ENCODE measurements at regions of chr16 and their contacts with region 1.

Region 1: GRCh38 chr16:56608043-56608875 is at the start of gene MT2A:
- DNase-seq: peak; percentile 93
- ATAC-seq: peak; percentile 48
- H3K4me3 ChIP-seq: peak within 1 kb of the TSS; percentile 90
- H3K27ac ChIP-seq: peak within 1 kb of the TSS; percentile 82
- H3K4me1 ChIP-seq: peaks cover 71% of the 10 kb centered on the region
- H3K27me3 ChIP-seq: no peaks in the 10 kb centered on the region
- CTCF ChIP-seq: no peak
- total RNA-seq, gene MT2A: 683 and 758 TPM in 2 replicates

Region 2: GRCh38 chr16:56625943-56626654 is 17.8 kb after region 1 on chr16:
- CTCF ChIA-PET with region 1: no interaction called
- POLR2A ChIA-PET with region 1: no interaction called
- intact Hi-C with region 1: loop called (anchors 2 kb)
- DNase-seq: no peak
- ATAC-seq: no peak
- H3K4me3 ChIP-seq: no peak overlapping the region
- H3K27ac ChIP-seq: no peak overlapping the region
- H3K4me1 ChIP-seq: peaks cover 9% of the 10 kb centered on the region
- H3K27me3 ChIP-seq: no peaks in the 10 kb centered on the region
- CTCF ChIP-seq: no peak

Region 3: GRCh38 chr16:56657555-56658326 is 49.5 kb after region 1 on chr16 and contains the start of gene MT1F:
- CTCF ChIA-PET with region 1: interaction called, 5 read pairs
- POLR2A ChIA-PET with region 1: interaction called, 9 read pairs
- intact Hi-C with region 1: loop called (anchors 10 kb)
- DNase-seq: peak; percentile 76
- ATAC-seq: peak; percentile 94
- H3K4me3 ChIP-seq: peak within 1 kb of the TSS; percentile 83
- H3K27ac ChIP-seq: 0 out of 2 replicates have a peak within 1 kb of the TSS, but pooled peaks have one; percentile 1
- H3K4me1 ChIP-seq: peaks cover 9% of the 10 kb centered on the region; the same call in 1 of the 2 replicates
- H3K27me3 ChIP-seq: no peaks in the 10 kb centered on the region
- CTCF ChIP-seq: no peak
- total RNA-seq, gene MT1F: 15.2 and 27.3 TPM in 2 replicates

Region 4: DNA sequence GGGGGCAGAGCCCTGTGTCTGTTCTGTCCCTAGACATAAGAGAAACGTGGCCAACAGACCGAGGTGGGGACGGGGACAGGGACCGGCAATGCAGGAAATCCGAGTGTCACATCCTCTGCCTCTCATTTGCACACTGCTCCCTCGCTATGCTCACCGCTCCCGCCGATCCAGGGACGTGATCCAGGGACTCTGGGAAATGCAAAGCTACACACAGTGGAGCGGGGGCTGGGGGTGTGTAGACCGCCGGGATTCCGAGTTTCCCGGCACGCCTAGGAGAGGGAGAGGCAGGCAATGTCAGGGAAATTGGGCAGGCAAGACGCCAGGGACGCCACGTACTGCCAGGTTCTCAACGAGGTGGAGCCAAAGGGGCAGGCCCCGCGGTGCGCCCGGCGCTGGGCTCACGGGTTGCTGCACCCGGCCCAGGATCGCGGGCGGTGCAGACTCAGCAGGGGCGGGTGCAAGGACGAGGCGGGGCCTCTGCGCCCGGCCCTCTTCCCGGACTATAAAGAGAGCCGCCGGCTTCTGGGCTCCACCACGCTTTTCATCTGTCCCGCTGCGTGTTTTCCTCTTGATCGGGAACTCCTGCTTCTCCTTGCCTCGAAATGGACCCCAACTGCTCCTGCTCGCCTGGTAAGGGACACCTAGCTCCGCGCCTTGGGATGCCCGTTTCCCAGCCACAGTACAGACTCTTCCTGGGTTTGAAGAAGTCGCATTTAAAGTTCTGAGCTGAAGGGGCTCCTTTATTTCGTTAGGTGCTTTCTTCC is 73.9 kb after region 1 on chr16 and contains the start of gene MT1X:
- CTCF ChIA-PET with region 1: no interaction called
- POLR2A ChIA-PET with region 1: interaction called, 3 read pairs
- intact Hi-C with region 1: loop called (anchors 5 kb)
- DNase-seq: peak; percentile 89
- ATAC-seq: peak; percentile 94
- H3K4me3 ChIP-seq: peak within 1 kb of the TSS; percentile 77
- H3K27ac ChIP-seq: peak within 1 kb of the TSS; percentile 10; the same call in 1 of the 2 replicates
- H3K4me1 ChIP-seq: peaks cover 29% of the 10 kb centered on the region
- H3K27me3 ChIP-seq: no peaks in the 10 kb centered on the region
- CTCF ChIP-seq: no peak
- total RNA-seq, gene MT1X: 83.8 and 120 TPM in 2 replicates

Measured in PC-3 (cell line).